Caco-2 (cell line): ENCODE measurements at regions of chr15 and their contacts with region 1.

Region 1: GRCh38 chr15:72722071-72722696 is 36.2 kb downstream of the BBS4 start:
- DNase-seq: peak; percentile 66 to 70
- H3K4me3 ChIP-seq: no peak overlapping the region
- H3K4me3 Mint-ChIP-seq: no peak overlapping the region
- H3K27ac Mint-ChIP-seq: no peak overlapping the region
- H3K4me1 ChIP-seq: peaks cover 7% of the 10 kb centered on the region; the same call in 1 of the 2 replicates
- H3K4me1 Mint-ChIP-seq: peaks cover 8% of the 10 kb centered on the region
- H3K27me3 ChIP-seq: no peaks in the 10 kb centered on the region
- H3K27me3 Mint-ChIP-seq: no peaks in the 10 kb centered on the region
- CTCF ChIP-seq: peak; percentile 74 to 80

Region 2: GRCh38 chr15:72252663-72253299 is 469.4 kb before region 1 on chr15:
- CTCF ChIA-PET with region 1: no interaction called
- POLR2A ChIA-PET with region 1: no interaction called
- intact Hi-C with region 1: no loop called
- DNase-seq: no peak
- H3K4me3 ChIP-seq: no peak overlapping the region
- H3K4me3 Mint-ChIP-seq: no peak overlapping the region
- H3K27ac Mint-ChIP-seq: no peak overlapping the region
- H3K4me1 ChIP-seq: no peaks in the 10 kb centered on the region
- H3K4me1 Mint-ChIP-seq: no peaks in the 10 kb centered on the region
- H3K27me3 ChIP-seq: no peaks in the 10 kb centered on the region
- H3K27me3 Mint-ChIP-seq: no peaks in the 10 kb centered on the region
- CTCF ChIP-seq: no peak

Region 3: GRCh38 chr15:72733941-72734738 is 12.0 kb after region 1 on chr15:
- CTCF ChIA-PET with region 1: interaction called, 16 read pairs
- POLR2A ChIA-PET with region 1: no interaction called
- intact Hi-C with region 1: no loop called
- DNase-seq: peak; percentile 28 to 40
- H3K4me3 ChIP-seq: no peak overlapping the region
- H3K4me3 Mint-ChIP-seq: peak overlapping the region; percentile 3
- H3K27ac Mint-ChIP-seq: peak overlapping the region; percentile 4
- H3K4me1 ChIP-seq: peaks cover 20% of the 10 kb centered on the region
- H3K4me1 Mint-ChIP-seq: peaks cover 10% of the 10 kb centered on the region
- H3K27me3 ChIP-seq: no peaks in the 10 kb centered on the region
- H3K27me3 Mint-ChIP-seq: no peaks in the 10 kb centered on the region
- CTCF ChIP-seq: no peak

Region 4: GRCh38 chr15:72783563-72784237 is 61.5 kb after region 1 on chr15 and contains the start of gene ADPGK:
- CTCF ChIA-PET with region 1: no interaction called
- POLR2A ChIA-PET with region 1: no interaction called
- intact Hi-C with region 1: loop called (anchors 5 kb)
- DNase-seq: peak; percentile 84 to 94
- H3K4me3 ChIP-seq: peak within 1 kb of the TSS; percentile 93
- H3K4me3 Mint-ChIP-seq: peak within 1 kb of the TSS; percentile 95
- H3K27ac Mint-ChIP-seq: peak within 1 kb of the TSS; percentile 94
- H3K4me1 ChIP-seq: 0 out of 2 replicates have a peak, but pooled peaks cover 6% of the 10 kb centered on the region
- H3K4me1 Mint-ChIP-seq: peaks cover 6% of the 10 kb centered on the region
- H3K27me3 ChIP-seq: no peaks in the 10 kb centered on the region
- H3K27me3 Mint-ChIP-seq: peaks cover 5% of the 10 kb centered on the region
- CTCF ChIP-seq: no peak
- total RNA-seq, gene ADPGK: 52.6 and 55.6 TPM in 2 replicates